K562 (cell line): ENCODE measurements at regions of chr3 and their contacts with region 1.

Region 1: GRCh38 chr3:150703299-150704134 is at the start of gene ERICH6:
- DNase-seq: peak; percentile 79 to 86 (median 84)
- ATAC-seq: peak; percentile 100
- H3K4me3 ChIP-seq: peak within 1 kb of the TSS; percentile 42
- H3K27ac ChIP-seq: peak within 1 kb of the TSS; percentile 69
- H3K4me1 ChIP-seq: peaks cover 0 to 9% of the 10 kb centered on the region in 2 experiments; a peak in 1 of 5 replicates
- H3K27me3 ChIP-seq: no peaks in the 10 kb centered on the region
- CTCF ChIP-seq: peak in 1 of 3 experiments; percentile 31; a peak in 2 of 6 replicates
- EP300 ChIP-seq: no peak
- POLR2A ChIP-seq: peak; percentile 52
- RAD21 ChIP-seq: no peak
- polyA plus RNA-seq, gene ERICH6: not detected

Region 2: DNA sequence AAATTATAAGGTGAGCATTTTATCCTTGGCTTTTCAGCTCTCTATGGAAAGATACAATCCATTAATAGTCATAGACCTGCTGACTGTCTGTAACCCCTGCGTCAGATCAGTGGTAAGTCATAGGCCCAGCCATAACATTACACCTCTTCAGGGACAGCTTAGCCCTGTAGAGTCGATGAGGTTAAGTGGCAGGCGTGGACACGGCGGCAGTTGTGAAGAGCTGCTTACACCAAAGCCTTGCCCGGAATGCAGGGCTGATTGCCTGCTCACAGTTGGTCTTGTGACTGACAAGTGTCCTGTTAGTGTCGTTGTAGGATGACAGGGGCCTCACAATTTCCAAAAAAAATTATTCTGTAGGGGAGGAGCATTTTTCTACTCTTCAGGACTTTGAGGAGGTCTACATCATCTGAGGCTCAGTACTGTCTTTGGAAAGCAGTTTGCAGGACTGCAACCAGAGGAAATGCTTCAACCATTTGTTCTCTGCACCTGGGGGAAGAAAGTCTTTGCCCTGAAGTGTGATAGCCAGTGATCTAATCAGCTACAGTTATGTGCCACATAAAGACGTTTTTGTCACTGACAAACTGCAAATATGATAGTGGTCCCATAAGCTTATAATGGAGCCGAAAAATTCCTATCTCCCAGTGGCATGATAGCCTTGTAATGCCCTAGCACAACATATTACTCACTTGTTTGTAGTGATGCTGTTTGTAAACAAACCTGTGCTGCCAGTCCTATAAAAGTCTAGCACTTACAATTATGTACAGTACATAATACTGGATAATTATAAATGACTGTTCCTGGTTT is 115.3 kb before region 1 on chr3:
- CTCF ChIA-PET with region 1: no interaction called
- POLR2A ChIA-PET with region 1: no interaction called
- in situ Hi-C with region 1: no loop called
- intact Hi-C with region 1: no loop called
- DNase-seq: no peak
- ATAC-seq: peak; percentile 43
- H3K4me3 ChIP-seq: no peak overlapping the region
- H3K27ac ChIP-seq: no peak overlapping the region
- H3K4me1 ChIP-seq: peaks cover 0 to 10% of the 10 kb centered on the region in 2 experiments; a peak in 2 of 5 replicates
- H3K27me3 ChIP-seq: no peaks in the 10 kb centered on the region
- CTCF ChIP-seq: no peak
- EP300 ChIP-seq: no peak
- POLR2A ChIP-seq: no peak
- RAD21 ChIP-seq: no peak

Region 3: DNA sequence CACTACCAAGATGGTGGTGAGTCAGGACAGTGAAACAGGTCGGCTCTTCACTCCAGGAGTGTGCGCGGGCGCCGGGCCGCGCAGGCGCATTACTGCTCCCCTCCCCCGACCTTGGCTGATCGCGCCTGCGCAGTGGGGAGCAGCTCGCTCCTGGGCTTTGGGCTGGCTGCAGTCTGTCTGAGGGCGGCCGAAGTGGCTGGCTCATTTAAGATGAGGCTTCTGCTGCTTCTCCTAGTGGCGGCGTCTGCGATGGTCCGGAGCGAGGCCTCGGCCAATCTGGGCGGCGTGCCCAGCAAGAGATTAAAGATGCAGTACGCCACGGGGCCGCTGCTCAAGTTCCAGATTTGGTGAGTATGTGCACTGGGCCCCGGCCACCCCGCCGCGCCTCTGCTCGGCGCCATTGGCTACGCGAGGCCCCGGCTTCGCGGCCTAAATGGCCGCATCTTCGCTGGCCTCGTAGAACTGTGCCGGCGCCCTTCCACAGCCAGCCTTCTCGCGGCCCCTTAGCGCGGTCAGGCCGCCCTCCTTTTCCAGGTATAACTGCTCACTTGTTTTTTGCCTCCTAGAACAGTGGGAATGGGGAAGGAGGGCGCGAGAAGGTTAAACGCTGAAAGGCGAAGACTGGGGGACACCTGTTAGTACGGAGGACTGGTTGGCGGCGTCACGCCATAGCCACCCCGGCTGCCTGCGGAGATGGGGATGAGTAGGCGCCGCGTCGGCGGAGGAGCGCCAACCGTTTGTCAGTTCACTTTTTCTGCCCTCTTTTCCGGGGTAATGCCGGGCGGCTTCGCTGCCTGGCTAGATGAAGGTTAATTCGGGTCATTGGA is 100.2 kb before region 1 on chr3 and contains the start of gene SELENOT:
- CTCF ChIA-PET with region 1: no interaction called
- POLR2A ChIA-PET with region 1: no interaction called
- in situ Hi-C with region 1: no loop called
- intact Hi-C with region 1: loop called (anchors 5 kb)
- DNase-seq: peak; percentile 97 to 98 (median 98)
- ATAC-seq: peak; percentile 82
- H3K4me3 ChIP-seq: peak within 1 kb of the TSS; percentile 94
- H3K27ac ChIP-seq: peak within 1 kb of the TSS; percentile 84
- H3K4me1 ChIP-seq: peaks cover 16 to 40% of the 10 kb centered on the region in 2 experiments
- H3K27me3 ChIP-seq: no peaks in the 10 kb centered on the region
- CTCF ChIP-seq: peak in 2 of 3 experiments; percentile 36 to 48; a peak in 3 of 6 replicates
- EP300 ChIP-seq: no peak; the same call in 1 of the 2 replicates
- POLR2A ChIP-seq: peak; percentile 98
- RAD21 ChIP-seq: peak in 1 of 2 experiments; percentile 32; a peak in 3 of 4 replicates
- polyA plus RNA-seq, gene SELENOT: 261 to 317 TPM